ENCODE measurements at regions of chr6 and their contacts with region 1.

Region 1: DNA sequence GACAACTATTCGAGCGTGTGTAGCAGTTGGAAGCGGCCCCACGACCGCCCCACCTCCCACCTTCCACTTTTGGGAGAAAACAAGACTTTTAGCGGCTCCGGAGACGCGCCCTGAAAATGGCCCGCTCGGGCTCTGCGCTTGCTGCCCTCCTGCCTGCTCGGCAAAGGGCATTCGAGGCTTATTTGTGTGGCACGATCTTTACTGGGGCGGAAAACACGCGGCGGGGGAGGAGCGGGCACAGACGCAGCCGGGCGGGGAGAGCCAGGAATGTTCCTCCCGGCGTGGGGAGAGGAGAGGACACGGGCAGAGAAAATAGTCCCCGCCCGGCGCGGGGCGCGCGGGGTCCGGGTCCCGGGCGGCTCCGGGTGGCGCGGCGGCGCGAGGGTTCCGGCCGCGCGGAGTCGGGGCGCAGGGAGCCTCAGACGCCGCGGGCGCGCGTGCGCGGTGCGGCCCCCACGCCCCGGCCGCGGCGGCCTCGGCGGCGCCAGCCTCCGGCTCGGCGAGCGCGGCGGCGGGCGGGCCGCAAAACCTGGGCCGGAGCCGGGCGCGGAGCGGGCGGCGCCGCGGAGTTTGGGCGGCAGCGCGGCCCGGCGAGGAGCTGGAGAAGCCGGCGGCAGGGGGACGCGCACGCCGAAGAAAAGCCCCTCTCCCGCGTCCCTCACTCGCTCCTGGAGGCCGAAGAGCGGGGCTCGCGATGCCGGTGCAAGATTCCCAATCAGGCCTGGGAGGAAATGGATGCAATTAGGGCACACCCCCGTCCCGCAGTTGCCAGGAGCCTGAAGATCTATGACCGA is 90.0 kb upstream of the ARID1B start:
- DNase-seq: no peak
- ATAC-seq: peak; percentile 69
- H3K4me3 ChIP-seq: peak overlapping the region; percentile 93
- H3K27ac ChIP-seq: peak overlapping the region; percentile 98
- H3K4me1 ChIP-seq: peaks cover 48% of the 10 kb centered on the region
- H3K27me3 ChIP-seq: no peaks in the 10 kb centered on the region
- CTCF ChIP-seq: no peak
- EP300 ChIP-seq: peak in 1 of 2 experiments; percentile 27; a peak in 1 of 4 replicates
- POLR2A ChIP-seq: peak; percentile 85
- RAD21 ChIP-seq: no peak; the same call in 1 of the 2 replicates

Region 2: DNA sequence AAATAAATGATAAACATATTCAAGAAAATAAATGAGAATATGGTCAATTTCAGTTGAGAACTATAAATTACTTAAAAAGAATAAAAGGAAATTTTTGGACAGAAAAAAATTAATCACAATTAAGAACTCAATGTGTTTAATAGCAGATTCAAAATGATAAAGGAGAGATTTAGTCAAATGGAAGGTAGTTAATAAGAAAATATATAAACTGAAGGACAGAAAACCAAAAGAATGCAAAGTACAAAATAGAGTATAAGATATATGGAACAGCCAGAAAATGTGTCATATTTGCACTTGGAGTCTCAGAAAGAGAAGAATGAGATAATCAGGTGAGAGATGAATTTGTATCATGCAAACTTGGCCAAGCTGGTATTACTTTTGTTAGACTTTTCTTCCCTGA is 111.8 kb before region 1 on chr6:
- CTCF ChIA-PET with region 1: no interaction called
- POLR2A ChIA-PET with region 1: no interaction called
- RAD21 ChIA-PET with region 1: no interaction called
- SMC1A ChIA-PET with region 1: no interaction called
- in situ Hi-C with region 1: no loop called
- intact Hi-C with region 1: no loop called
- DNase-seq: no peak
- ATAC-seq: no peak
- H3K4me3 ChIP-seq: no peak overlapping the region
- H3K27ac ChIP-seq: no peak overlapping the region
- H3K4me1 ChIP-seq: no peaks in the 10 kb centered on the region
- H3K27me3 ChIP-seq: no peaks in the 10 kb centered on the region
- CTCF ChIP-seq: no peak
- EP300 ChIP-seq: no peak
- POLR2A ChIP-seq: no peak
- RAD21 ChIP-seq: no peak

Region 3: GRCh38 chr6:156676721-156677120 is 10.5 kb before region 1 on chr6:
- CTCF ChIA-PET with region 1: no interaction called
- POLR2A ChIA-PET with region 1: no interaction called
- RAD21 ChIA-PET with region 1: interaction called, 10 read pairs
- SMC1A ChIA-PET with region 1: interaction called, 8 read pairs
- in situ Hi-C with region 1: no loop called
- intact Hi-C with region 1: no loop called
- DNase-seq: no peak
- ATAC-seq: no peak
- H3K4me3 ChIP-seq: no peak overlapping the region
- H3K27ac ChIP-seq: no peak overlapping the region
- H3K4me1 ChIP-seq: no peaks in the 10 kb centered on the region; the same call in 1 of the 2 replicates
- H3K27me3 ChIP-seq: no peaks in the 10 kb centered on the region
- CTCF ChIP-seq: no peak
- EP300 ChIP-seq: no peak
- POLR2A ChIP-seq: no peak
- RAD21 ChIP-seq: no peak

Region 4: DNA sequence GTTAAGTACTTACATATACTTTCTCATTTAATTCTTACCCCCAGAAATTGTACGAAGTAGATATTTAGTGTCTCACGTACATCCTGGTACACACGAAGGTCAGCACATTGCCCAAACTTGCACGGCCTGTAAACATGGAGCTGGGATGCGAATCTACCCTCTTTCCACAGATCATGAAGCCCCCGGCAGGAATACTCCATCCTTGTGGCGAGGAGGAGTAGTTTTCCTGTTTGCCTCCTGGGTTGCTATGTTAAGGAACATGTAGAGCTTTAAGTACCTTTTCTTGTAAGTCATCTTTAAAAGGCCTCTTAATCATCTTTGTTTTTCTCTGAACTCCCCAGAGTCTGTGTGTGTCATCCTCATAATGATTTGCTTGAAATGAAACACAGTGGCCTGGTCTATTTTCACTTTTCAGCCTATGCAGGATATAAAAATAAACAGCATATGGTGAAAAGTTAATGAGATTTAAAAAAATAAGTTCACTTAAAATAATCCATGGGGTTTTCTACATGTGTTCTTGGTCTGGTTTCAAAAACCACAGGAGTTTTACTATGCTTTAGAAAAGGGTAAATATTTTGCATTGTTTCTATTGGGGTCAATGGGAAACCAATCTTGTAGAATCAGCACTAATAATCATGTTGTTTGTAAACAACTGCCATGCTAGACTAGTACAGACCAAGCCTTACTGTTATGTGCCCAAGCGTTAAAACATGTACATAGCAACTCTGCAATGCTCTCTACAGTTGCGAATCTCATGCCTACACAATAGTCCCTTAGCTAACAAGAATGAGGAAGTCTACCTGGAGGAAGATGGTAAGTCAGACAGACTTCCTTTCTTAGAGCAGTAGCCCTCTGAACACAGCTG is 80.6 kb after region 1 on chr6:
- CTCF ChIA-PET with region 1: no interaction called
- POLR2A ChIA-PET with region 1: interaction called, 3 read pairs
- RAD21 ChIA-PET with region 1: interaction called, 9 read pairs
- SMC1A ChIA-PET with region 1: interaction called, 11 read pairs
- in situ Hi-C with region 1: loop called (anchors 5 kb)
- intact Hi-C with region 1: no loop called
- DNase-seq: peak; percentile 90
- ATAC-seq: peak; percentile 96
- H3K4me3 ChIP-seq: peak overlapping the region; percentile 56; the same call in 1 of the 2 replicates
- H3K27ac ChIP-seq: peak overlapping the region; percentile 63
- H3K4me1 ChIP-seq: peaks cover 19% of the 10 kb centered on the region
- H3K27me3 ChIP-seq: no peaks in the 10 kb centered on the region
- CTCF ChIP-seq: no peak
- EP300 ChIP-seq: peak; percentile 20 to 54; a peak in 3 of 4 replicates
- POLR2A ChIP-seq: no peak
- RAD21 ChIP-seq: 0 out of 2 replicates have a peak, but pooled peaks have one; percentile 15

Region 5: GRCh38 chr6:156822747-156823206 is 135.6 kb after region 1 on chr6:
- CTCF ChIA-PET with region 1: no interaction called
- POLR2A ChIA-PET with region 1: no interaction called
- RAD21 ChIA-PET with region 1: no interaction called
- SMC1A ChIA-PET with region 1: no interaction called
- in situ Hi-C with region 1: no loop called
- intact Hi-C with region 1: no loop called
- DNase-seq: no peak
- ATAC-seq: no peak
- H3K4me3 ChIP-seq: no peak overlapping the region
- H3K27ac ChIP-seq: no peak overlapping the region
- H3K4me1 ChIP-seq: peaks cover 29% of the 10 kb centered on the region
- H3K27me3 ChIP-seq: no peaks in the 10 kb centered on the region
- CTCF ChIP-seq: no peak
- EP300 ChIP-seq: no peak
- POLR2A ChIP-seq: no peak; the same call in 1 of the 2 replicates
- RAD21 ChIP-seq: no peak